ENCODE measurements at regions of chr9 and their contacts with region 1.

Region 1: DNA sequence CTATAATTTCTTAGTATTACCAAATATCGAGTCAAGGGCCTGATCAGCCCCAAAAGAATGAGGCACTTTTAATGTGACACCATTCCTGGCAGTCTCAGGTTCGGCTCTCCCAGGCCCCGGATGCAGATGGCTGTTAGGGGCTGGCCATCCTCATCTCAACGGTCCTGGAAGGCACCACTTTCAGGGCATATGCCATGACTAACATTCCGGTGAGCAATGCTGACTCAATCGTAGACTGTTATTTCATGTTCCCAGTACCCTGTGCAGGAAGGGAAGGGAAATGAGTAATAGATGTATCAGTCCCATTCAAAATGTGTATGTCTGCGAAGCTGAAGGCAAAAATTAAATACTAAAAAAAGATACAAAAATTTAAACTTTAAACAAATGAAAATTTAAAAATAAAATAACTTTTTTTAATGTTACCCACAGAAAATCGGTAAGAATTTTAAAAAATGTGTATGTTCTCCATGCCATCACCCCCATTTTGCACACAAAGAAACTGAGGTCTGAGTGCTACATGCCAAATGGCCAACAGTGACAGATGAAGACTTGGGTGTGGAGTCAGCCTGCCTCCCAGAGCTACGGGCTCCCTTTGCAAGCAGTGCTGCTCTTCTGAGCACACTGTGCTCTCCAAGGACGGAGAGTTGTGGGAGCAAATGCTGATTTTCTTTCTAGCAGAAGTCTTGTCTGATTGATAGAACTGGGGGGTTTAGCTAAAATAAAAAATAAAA is 79.0 kb downstream of the GLDC start:
- DNase-seq: no peak
- ATAC-seq: no peak
- H3K4me3 Mint-ChIP-seq: no peak overlapping the region
- H3K27ac Mint-ChIP-seq: no peak overlapping the region
- H3K4me1 Mint-ChIP-seq: no peaks in the 10 kb centered on the region
- H3K27me3 Mint-ChIP-seq: no peaks in the 10 kb centered on the region

Region 2: DNA sequence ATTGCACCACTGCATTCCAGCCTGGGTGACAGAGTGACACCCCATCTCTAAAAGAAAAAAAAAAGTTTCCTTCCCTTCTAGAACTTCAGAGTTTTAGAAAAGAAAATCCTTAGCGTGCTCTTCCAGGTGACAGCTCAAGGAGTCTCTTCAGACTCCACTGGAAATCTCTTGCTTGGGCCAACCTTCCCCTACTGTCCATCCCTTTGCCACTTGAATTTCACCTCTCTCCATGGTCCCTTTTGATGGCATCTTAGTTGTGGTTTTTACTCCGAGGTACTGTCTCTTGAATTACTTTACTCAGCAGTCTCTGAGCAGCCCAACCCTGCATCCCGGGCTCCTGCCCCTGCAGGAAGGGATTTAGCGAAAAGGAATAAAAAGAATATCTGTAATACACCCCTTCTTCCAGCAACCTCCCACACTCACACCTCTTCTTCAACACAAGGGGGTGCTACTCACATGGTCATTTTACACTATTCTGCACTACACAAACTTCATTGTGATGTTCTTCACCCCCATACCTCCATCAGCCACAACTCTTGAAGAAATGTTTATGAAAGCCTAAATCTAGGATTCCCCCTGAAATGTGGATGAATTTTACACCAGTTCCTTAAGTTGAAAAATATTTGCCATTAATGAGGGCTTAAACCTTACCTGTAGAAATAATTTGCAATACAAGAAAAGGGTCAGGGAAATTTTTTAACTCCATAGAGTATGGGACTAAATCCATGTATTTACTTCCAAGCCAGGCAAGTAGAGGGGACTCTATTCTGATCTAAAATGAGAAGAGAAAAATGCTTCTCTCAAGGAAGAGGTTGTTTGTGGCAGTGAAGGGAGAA is 212.5 kb before region 1 on chr9:
- CTCF ChIA-PET with region 1: interaction called, 83 read pairs
- POLR2A ChIA-PET with region 1: interaction called, 3 read pairs
- DNase-seq: peak; percentile 39
- ATAC-seq: peak; percentile 95
- H3K4me3 Mint-ChIP-seq: no peak overlapping the region
- H3K27ac Mint-ChIP-seq: no peak overlapping the region
- H3K4me1 Mint-ChIP-seq: peaks cover 7% of the 10 kb centered on the region
- H3K27me3 Mint-ChIP-seq: peaks cover 22% of the 10 kb centered on the region

Region 3: DNA sequence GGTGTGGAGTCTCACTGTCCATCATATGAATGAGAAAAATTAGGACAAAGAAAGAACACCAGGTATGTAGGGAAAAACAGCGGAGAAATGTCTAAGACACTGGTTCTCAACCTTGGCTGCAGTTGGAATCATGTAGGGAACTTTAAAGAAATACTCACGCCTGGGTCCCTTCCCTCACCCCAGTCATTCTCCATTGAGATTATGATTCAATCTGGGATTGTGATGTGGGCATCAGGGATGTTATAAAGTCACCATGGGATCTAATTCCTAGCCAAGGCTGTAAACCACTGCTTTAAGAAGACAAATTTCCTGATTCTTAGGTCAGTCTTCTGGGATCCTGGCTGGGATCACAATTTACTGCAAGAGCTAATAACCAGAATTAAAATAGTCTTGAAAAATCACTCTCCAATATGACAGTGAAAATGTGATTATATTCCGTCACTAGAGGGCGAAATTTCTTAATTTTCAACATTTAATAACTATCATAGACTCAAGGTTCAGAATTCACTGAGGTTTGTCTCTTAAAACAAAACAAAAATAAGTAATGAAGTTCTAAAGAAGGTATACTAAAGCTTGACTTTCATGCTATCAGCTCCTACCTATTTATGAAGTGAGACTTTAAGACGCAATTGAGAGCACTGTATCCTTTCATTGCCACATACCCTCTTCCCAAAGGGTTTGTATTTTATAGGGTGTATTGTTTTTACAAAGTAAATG is 18.5 kb after region 1 on chr9:
- CTCF ChIA-PET with region 1: interaction called, 10 read pairs
- POLR2A ChIA-PET with region 1: no interaction called
- DNase-seq: no peak
- ATAC-seq: peak; percentile 64
- H3K4me3 Mint-ChIP-seq: no peak overlapping the region
- H3K27ac Mint-ChIP-seq: no peak overlapping the region
- H3K4me1 Mint-ChIP-seq: no peaks in the 10 kb centered on the region
- H3K27me3 Mint-ChIP-seq: peaks cover 2% of the 10 kb centered on the region

Measured in activated CD8-positive, alpha-beta T cell treated with anti-CD3 and anti-CD28 coated beads, Interleukin-2, amount 10 ng/mL, durations not matched to agents 7 days and 5 days (primary cell).